Mammary epithelial cell (primary cell): ENCODE measurements at regions of chr1 and their contacts with region 1.

Region 1: GRCh38 chr1:158035976-158036583 is 42.6 kb downstream of the KIRREL1 start:
- DNase-seq: peak; percentile 24
- H3K4me3 ChIP-seq: no peak overlapping the region
- H3K27ac ChIP-seq: no peak overlapping the region
- H3K4me1 ChIP-seq: peaks cover 30% of the 10 kb centered on the region
- H3K27me3 ChIP-seq: no peaks in the 10 kb centered on the region
- CTCF ChIP-seq: peak; percentile 70 to 72

Region 2: GRCh38 chr1:158002022-158002630 is 34.0 kb before region 1 on chr1:
- CTCF ChIA-PET with region 1: no interaction called
- dilution Hi-C with region 1: no loop called
- in situ Hi-C with region 1: loop called in 1 of 2 experiments (anchors 5 kb)
- intact Hi-C with region 1: loop called (anchors 2 kb)
- DNase-seq: peak; percentile 23
- H3K4me3 ChIP-seq: no peak overlapping the region
- H3K27ac ChIP-seq: peak overlapping the region; percentile 42
- H3K4me1 ChIP-seq: peaks cover 78% of the 10 kb centered on the region
- H3K27me3 ChIP-seq: no peaks in the 10 kb centered on the region
- CTCF ChIP-seq: no peak

Region 3: GRCh38 chr1:158075078-158075477 is 39.0 kb after region 1 on chr1:
- CTCF ChIA-PET with region 1: no interaction called
- dilution Hi-C with region 1: no loop called
- in situ Hi-C with region 1: no loop called
- intact Hi-C with region 1: no loop called
- DNase-seq: no peak
- H3K4me3 ChIP-seq: no peak overlapping the region
- H3K27ac ChIP-seq: no peak overlapping the region
- H3K4me1 ChIP-seq: peaks cover 10% of the 10 kb centered on the region
- H3K27me3 ChIP-seq: no peaks in the 10 kb centered on the region
- CTCF ChIP-seq: no peak

Region 4: DNA sequence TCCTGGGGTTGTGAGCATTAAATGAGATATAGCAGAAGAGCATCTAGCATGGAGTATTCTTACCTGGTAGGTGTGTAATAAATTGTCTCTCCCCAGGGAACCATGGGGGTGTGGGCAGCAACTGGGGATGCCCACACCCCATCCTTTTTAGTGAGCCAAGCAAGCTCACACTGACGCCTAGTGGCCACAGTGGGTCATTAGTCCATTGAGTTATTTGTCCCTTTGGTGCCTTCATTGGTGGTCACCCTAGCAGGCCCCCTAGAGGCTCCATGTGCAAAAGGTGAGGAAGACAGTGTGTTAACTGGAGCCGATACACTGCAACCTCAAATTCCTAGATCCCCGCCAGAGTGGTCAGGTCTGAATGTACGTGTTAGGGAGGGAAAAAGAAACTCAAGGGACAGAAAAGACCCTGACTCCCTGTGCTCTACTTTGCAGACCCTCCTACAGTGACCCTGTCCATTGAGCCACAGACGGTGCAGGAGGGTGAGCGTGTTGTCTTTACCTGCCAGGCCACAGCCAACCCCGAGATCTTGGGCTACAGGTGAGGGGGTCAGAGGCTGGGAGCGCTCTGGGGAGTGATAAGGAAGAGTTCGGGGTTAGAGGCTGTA is 51.3 kb after region 1 on chr1:
- CTCF ChIA-PET with region 1: no interaction called
- dilution Hi-C with region 1: no loop called
- in situ Hi-C with region 1: no loop called
- intact Hi-C with region 1: loop called (anchors 1 kb)
- DNase-seq: peak; percentile 35
- H3K4me3 ChIP-seq: no peak overlapping the region
- H3K27ac ChIP-seq: no peak overlapping the region
- H3K4me1 ChIP-seq: no peaks in the 10 kb centered on the region
- H3K27me3 ChIP-seq: no peaks in the 10 kb centered on the region
- CTCF ChIP-seq: peak; percentile 86 to 92